Aorta (tissue), 5 donors: ENCODE measurements at regions of chr14 and their contacts with region 1.

Region 1: GRCh38 chr14:59333668-59334067 is 131.5 kb downstream of the GPR135 start:
- DNase-seq: no peak
- ATAC-seq: peak; percentile 90
- H3K4me3 ChIP-seq: no peak overlapping the region
- H3K27ac ChIP-seq: peak overlapping the region in 1 of 2 donors; percentile 95
- H3K4me1 ChIP-seq: peaks cover 4 to 12% of the 10 kb centered on the region in 2 donors
- H3K27me3 ChIP-seq: no peaks in the 10 kb centered on the region

Region 2: GRCh38 chr14:58836293-58836974 is 497.2 kb before region 1 on chr14:
- intact Hi-C with region 1: no loop called
- DNase-seq: no peak
- ATAC-seq: no peak
- H3K4me3 ChIP-seq: no peak overlapping the region
- H3K27ac ChIP-seq: no peak overlapping the region
- H3K4me1 ChIP-seq: peaks cover 0 to 3% of the 10 kb centered on the region in 2 donors
- H3K27me3 ChIP-seq: no peaks in the 10 kb centered on the region

Region 3: DNA sequence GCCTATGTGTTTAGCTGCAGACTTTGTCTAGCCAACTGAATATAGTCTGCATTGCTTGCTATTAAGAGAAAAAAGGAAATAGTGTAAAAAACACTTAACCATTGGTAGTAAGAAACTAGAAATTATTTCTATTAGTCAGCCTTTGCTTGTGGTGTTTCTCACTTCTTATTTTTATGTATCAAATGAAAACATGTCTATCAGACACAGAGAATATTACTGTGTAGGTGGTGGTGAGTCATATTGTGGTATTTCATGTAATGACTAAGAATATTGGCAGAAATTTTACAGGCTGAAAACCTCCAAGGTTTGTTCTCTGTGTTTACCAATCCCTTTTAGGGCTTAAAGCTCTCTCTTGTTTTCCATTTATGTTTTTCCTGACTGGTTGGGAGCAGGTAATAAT is 58.0 kb before region 1 on chr14:
- intact Hi-C with region 1: loop called in 1 of 2 experiments (anchors 10 kb)
- DNase-seq: no peak
- ATAC-seq: peak; percentile 70
- H3K4me3 ChIP-seq: no peak overlapping the region
- H3K27ac ChIP-seq: peak overlapping the region in 1 of 2 donors; percentile 76
- H3K4me1 ChIP-seq: peaks cover 4 to 9% of the 10 kb centered on the region in 2 donors
- H3K27me3 ChIP-seq: no peaks in the 10 kb centered on the region

Region 4: GRCh38 chr14:59301354-59301753 is 32.3 kb before region 1 on chr14:
- intact Hi-C with region 1: no loop called
- DNase-seq: no peak
- ATAC-seq: no peak
- H3K4me3 ChIP-seq: no peak overlapping the region
- H3K27ac ChIP-seq: no peak overlapping the region
- H3K4me1 ChIP-seq: peaks cover 2 to 16% of the 10 kb centered on the region in 2 donors
- H3K27me3 ChIP-seq: no peaks in the 10 kb centered on the region

Region 5: GRCh38 chr14:59428581-59429012 is 94.9 kb after region 1 on chr14:
- intact Hi-C with region 1: loop called in 1 of 2 experiments (anchors 5 kb)
- DNase-seq: no peak
- ATAC-seq: peak; percentile 33
- H3K4me3 ChIP-seq: no peak overlapping the region
- H3K27ac ChIP-seq: peak overlapping the region; percentile 11 to 62
- H3K4me1 ChIP-seq: peaks cover 3 to 7% of the 10 kb centered on the region in 2 donors
- H3K27me3 ChIP-seq: no peaks in the 10 kb centered on the region

Region 6: GRCh38 chr14:59438195-59438647 is 104.6 kb after region 1 on chr14:
- intact Hi-C with region 1: loop called in 1 of 2 experiments (anchors 5 kb)
- DNase-seq: no peak
- ATAC-seq: no peak
- H3K4me3 ChIP-seq: no peak overlapping the region
- H3K27ac ChIP-seq: no peak overlapping the region
- H3K4me1 ChIP-seq: peaks cover 3 to 8% of the 10 kb centered on the region in 2 donors
- H3K27me3 ChIP-seq: no peaks in the 10 kb centered on the region